H1 (cell line): ENCODE measurements at regions of chr11 and their contacts with region 1.

Region 1: DNA sequence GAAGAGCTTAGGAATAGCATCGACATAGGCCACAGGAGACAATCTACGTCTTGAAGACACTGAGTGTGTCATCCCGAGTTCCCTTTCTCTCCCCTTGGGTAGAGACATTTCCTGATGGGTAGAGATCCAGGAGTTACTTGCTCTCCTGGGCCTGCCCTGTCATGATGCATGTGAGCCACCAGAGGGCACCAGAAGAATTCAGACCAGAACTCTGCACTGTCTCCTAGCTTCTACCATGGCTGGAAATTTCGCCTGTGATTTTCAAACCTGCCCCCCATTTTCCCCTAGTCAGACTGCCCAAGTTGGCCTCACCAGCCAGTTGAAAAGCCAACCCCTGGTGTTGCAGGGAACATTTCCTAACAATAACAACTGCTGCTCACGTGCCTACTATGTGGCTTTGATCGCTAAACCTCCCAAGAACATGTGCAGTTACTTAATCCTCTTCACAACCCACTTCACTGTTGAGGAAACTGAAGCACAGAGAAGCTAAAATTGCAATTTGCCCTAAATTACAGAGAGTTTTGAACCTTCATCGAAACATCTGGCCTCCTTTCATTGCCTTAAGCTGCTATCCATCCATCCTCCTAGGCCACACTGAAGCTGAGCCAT is 47.2 kb downstream of the C11orf58 start:
- DNase-seq: peak in 1 of 2 experiments; percentile 76
- H3K4me3 ChIP-seq: no peak overlapping the region
- H3K27ac ChIP-seq: no peak overlapping the region
- H3K4me1 ChIP-seq: no peaks in the 10 kb centered on the region
- H3K27me3 ChIP-seq: no peaks in the 10 kb centered on the region
- CTCF ChIP-seq: peak; percentile 75 to 93 (median 88)
- EP300 ChIP-seq: no peak
- POLR2A ChIP-seq: no peak
- RAD21 ChIP-seq: peak; percentile 83 to 88

Region 2: GRCh38 chr11:16738193-16738946 is 47.3 kb before region 1 on chr11 and contains the start of gene C11orf58:
- CTCF ChIA-PET with region 1: interaction called, 3 read pairs
- POLR2A ChIA-PET with region 1: interaction called, 11 read pairs
- DNase-seq: peak; percentile 86 to 94
- H3K4me3 ChIP-seq: peak within 1 kb of the TSS; percentile 82 to 100 (median 90)
- H3K27ac ChIP-seq: peak within 1 kb of the TSS; percentile 94
- H3K4me1 ChIP-seq: peaks cover 0 to 6% (median 3%) of the 10 kb centered on the region in 4 experiments; a peak in 4 of 7 replicates
- H3K27me3 ChIP-seq: no peaks in the 10 kb centered on the region
- CTCF ChIP-seq: no peak
- EP300 ChIP-seq: no peak
- POLR2A ChIP-seq: peak; percentile 98
- RAD21 ChIP-seq: no peak
- total RNA-seq, gene C11orf58: 161 and 181 TPM in 2 replicates

Region 3: GRCh38 chr11:16796311-16796710 is 10.7 kb after region 1 on chr11:
- CTCF ChIA-PET with region 1: interaction called, 28 read pairs
- POLR2A ChIA-PET with region 1: no interaction called
- DNase-seq: no peak
- H3K4me3 ChIP-seq: no peak overlapping the region
- H3K27ac ChIP-seq: no peak overlapping the region
- H3K4me1 ChIP-seq: no peaks in the 10 kb centered on the region
- H3K27me3 ChIP-seq: no peaks in the 10 kb centered on the region
- CTCF ChIP-seq: no peak
- EP300 ChIP-seq: no peak
- POLR2A ChIP-seq: no peak
- RAD21 ChIP-seq: no peak

Region 4: DNA sequence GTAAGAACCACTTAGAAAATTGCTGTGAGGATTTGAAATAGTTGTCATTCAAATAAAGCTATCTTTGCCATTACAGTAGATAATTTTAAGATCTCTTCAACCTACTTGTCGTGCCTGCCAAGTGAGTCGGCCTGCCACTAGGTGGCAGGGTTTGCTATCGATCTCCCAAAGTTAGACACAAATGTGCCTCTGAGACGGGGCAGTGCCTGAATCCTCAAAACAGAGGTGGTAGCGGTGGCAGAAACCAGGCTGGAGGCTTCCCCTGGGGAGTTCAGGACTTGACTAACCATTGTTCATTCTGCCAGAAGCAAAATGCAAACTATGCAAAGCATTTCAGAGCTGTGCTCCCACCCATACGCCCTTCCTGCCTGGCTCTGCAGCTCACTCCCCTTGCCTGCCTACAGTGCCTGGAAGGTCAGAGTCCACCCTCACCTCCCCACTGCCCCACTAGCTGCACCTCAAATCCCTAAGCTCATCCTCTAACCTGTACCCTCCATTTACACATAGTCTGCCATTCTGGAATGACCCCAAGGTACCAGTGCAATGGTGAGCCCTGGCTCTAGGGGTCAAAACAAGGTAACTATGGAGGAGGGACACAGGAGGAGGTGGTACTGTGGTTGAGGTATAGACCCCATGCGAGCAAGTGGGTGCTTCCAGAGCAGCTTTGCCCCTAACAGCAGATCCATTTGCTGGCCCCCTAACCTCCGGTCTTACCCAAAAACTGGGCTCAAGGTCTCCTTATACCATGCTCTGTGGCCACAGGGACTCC is 34.9 kb after region 1 on chr11:
- CTCF ChIA-PET with region 1: interaction called, 100 read pairs
- POLR2A ChIA-PET with region 1: no interaction called
- DNase-seq: peak; percentile 66 to 91
- H3K4me3 ChIP-seq: no peak overlapping the region
- H3K27ac ChIP-seq: no peak overlapping the region
- H3K4me1 ChIP-seq: peaks cover 4 to 7% (median 5%) of the 10 kb centered on the region in 4 experiments; a peak in 5 of 7 replicates
- H3K27me3 ChIP-seq: no peaks in the 10 kb centered on the region
- CTCF ChIP-seq: peak; percentile 82 to 93 (median 85)
- EP300 ChIP-seq: no peak
- POLR2A ChIP-seq: no peak
- RAD21 ChIP-seq: peak; percentile 84 to 87

Region 5: GRCh38 chr11:16935518-16936302 is 150.1 kb after region 1 on chr11:
- CTCF ChIA-PET with region 1: interaction called, 12 read pairs
- POLR2A ChIA-PET with region 1: no interaction called
- DNase-seq: no peak
- H3K4me3 ChIP-seq: no peak overlapping the region
- H3K27ac ChIP-seq: no peak overlapping the region
- H3K4me1 ChIP-seq: peaks cover 0 to 3% (median 0%) of the 10 kb centered on the region in 4 experiments; a peak in 2 of 7 replicates
- H3K27me3 ChIP-seq: no peaks in the 10 kb centered on the region
- CTCF ChIP-seq: peak in 2 of 3 experiments; percentile 73 to 74; a peak in 3 of 4 replicates
- EP300 ChIP-seq: no peak
- POLR2A ChIP-seq: no peak
- RAD21 ChIP-seq: peak; percentile 80 to 84

Region 6: GRCh38 chr11:17077520-17078401 is 292.1 kb after region 1 on chr11 and contains the start of gene RPS13:
- CTCF ChIA-PET with region 1: interaction called, 7 read pairs
- POLR2A ChIA-PET with region 1: interaction called, 12 read pairs
- DNase-seq: peak; percentile 91 to 98
- H3K4me3 ChIP-seq: peak within 1 kb of the TSS; percentile 84 to 99 (median 94)
- H3K27ac ChIP-seq: peak within 1 kb of the TSS; percentile 97
- H3K4me1 ChIP-seq: peaks cover 0 to 5% (median 3%) of the 10 kb centered on the region in 4 experiments; a peak in 6 of 7 replicates
- H3K27me3 ChIP-seq: no peaks in the 10 kb centered on the region
- CTCF ChIP-seq: peak in 1 of 3 experiments; percentile 1; a peak in 1 of 4 replicates
- EP300 ChIP-seq: no peak
- POLR2A ChIP-seq: peak; percentile 92 to 97; a peak in 2 of 3 replicates
- RAD21 ChIP-seq: no peak
- total RNA-seq, gene RPS13: 1,310 and 1,336 TPM in 2 replicates